HepG2 (cell line): ENCODE measurements at regions of chr3 and their contacts with region 1.

Region 1: GRCh38 chr3:4978204-4978965 is 852 bp upstream of the BHLHE40 start:
- DNase-seq: peak; percentile 91
- ATAC-seq: peak; percentile 74
- H3K4me3 ChIP-seq: peak overlapping the region; percentile 45 to 95 (median 57)
- H3K27ac ChIP-seq: peak overlapping the region; percentile 100
- H3K4me1 ChIP-seq: peaks cover 32% of the 10 kb centered on the region
- H3K27me3 ChIP-seq: no peaks in the 10 kb centered on the region; a peak in 1 of 5 replicates
- CTCF ChIP-seq: no peak; the same call in 1 of the 2 replicates
- EP300 ChIP-seq: peak; percentile 39 to 81; a peak in 3 of 4 replicates
- POLR2A ChIP-seq: peak in 1 of 2 experiments; percentile 83; a peak in 2 of 4 replicates
- RAD21 ChIP-seq: peak; percentile 28; the same call in 1 of the 2 replicates

Region 2: GRCh38 chr3:4712143-4712542 is 266.2 kb before region 1 on chr3:
- CTCF ChIA-PET with region 1: interaction called, 15 read pairs
- POLR2A ChIA-PET with region 1: no interaction called
- in situ Hi-C with region 1: no loop called
- intact Hi-C with region 1: loop called (anchors 1 kb)
- DNase-seq: no peak
- ATAC-seq: no peak
- H3K4me3 ChIP-seq: no peak overlapping the region
- H3K27ac ChIP-seq: no peak overlapping the region
- H3K4me1 ChIP-seq: no peaks in the 10 kb centered on the region
- H3K27me3 ChIP-seq: no peaks in the 10 kb centered on the region
- CTCF ChIP-seq: no peak
- EP300 ChIP-seq: no peak
- POLR2A ChIP-seq: no peak
- RAD21 ChIP-seq: no peak

Region 3: DNA sequence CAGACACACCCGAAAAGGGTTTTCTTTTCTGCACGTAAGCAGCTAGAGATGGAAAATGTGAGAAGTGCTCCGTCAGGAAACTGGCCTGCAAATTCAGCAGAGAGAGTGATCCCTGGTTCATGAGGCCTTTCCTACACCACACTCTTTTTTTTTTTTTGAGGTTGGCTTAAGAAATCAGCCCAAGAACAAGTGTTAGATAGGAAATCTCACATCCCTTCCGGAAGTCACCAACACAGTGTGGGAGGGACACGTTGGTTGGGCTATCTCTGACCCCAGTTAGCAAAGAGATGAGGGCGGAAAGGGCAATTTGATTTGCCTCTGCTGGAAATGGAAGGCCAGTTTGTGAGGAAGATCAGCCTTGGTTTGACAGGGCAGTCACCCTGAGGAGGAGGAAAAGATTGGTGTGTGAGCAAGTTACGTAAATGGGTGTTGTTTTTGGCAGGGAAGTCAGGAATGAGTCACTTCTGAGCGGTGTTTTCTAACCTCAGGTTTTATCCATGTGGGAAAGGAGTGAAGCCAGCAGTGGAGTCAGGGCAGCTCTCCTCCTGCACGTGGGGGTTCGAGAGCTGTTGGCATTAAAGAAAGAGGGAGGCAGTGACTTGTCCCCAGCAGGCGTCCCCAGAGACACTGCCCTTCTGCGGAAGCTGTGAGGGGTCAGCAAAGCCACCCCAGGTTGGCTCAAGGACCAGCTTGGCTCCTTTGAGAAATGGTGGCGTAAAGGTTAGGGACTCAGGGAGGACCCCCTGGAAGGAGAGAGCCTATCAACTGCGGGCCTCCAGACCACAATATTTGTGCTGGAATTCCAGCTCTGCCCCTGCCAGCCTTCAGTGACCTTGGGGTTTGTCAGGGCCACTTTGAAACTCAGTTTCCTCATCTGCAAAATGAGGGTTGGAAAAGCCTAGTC is 236.7 kb before region 1 on chr3:
- CTCF ChIA-PET with region 1: no interaction called
- POLR2A ChIA-PET with region 1: interaction called, 4 read pairs
- in situ Hi-C with region 1: no loop called
- intact Hi-C with region 1: loop called (anchors 2 kb)
- DNase-seq: peak; percentile 45
- ATAC-seq: no peak
- H3K4me3 ChIP-seq: no peak overlapping the region
- H3K27ac ChIP-seq: no peak overlapping the region
- H3K4me1 ChIP-seq: peaks cover 52% of the 10 kb centered on the region
- H3K27me3 ChIP-seq: no peaks in the 10 kb centered on the region
- CTCF ChIP-seq: no peak
- EP300 ChIP-seq: no peak
- POLR2A ChIP-seq: no peak
- RAD21 ChIP-seq: no peak

Region 4: DNA sequence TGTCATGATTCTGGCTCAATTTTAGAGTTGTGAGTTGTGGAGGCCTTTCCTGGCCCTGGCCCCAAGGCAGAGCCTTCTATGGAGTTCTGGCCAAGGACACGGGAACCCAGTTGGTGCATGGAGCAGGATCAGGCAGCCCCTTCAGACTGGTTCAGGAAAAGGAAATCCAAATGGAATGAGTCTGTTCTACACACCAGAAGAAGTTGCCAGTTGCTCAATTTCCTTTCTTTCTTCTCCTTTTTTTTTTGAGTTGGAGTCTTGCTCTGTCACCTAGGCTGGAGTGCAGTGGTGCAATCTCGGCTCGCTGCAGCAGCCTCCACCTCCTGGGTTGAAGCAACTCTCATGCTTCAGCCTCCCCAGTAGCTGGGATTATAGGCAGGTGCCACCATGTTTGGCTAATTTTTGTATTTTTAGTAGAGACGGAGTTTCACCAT is 28.0 kb before region 1 on chr3:
- CTCF ChIA-PET with region 1: no interaction called
- POLR2A ChIA-PET with region 1: no interaction called
- in situ Hi-C with region 1: no loop called
- intact Hi-C with region 1: no loop called
- DNase-seq: no peak
- ATAC-seq: no peak; the same call in 2 of the 3 replicates
- H3K4me3 ChIP-seq: no peak overlapping the region
- H3K27ac ChIP-seq: no peak overlapping the region
- H3K4me1 ChIP-seq: peaks cover 48% of the 10 kb centered on the region
- H3K27me3 ChIP-seq: no peaks in the 10 kb centered on the region
- CTCF ChIP-seq: no peak
- EP300 ChIP-seq: no peak
- POLR2A ChIP-seq: no peak
- RAD21 ChIP-seq: no peak

Region 5: DNA sequence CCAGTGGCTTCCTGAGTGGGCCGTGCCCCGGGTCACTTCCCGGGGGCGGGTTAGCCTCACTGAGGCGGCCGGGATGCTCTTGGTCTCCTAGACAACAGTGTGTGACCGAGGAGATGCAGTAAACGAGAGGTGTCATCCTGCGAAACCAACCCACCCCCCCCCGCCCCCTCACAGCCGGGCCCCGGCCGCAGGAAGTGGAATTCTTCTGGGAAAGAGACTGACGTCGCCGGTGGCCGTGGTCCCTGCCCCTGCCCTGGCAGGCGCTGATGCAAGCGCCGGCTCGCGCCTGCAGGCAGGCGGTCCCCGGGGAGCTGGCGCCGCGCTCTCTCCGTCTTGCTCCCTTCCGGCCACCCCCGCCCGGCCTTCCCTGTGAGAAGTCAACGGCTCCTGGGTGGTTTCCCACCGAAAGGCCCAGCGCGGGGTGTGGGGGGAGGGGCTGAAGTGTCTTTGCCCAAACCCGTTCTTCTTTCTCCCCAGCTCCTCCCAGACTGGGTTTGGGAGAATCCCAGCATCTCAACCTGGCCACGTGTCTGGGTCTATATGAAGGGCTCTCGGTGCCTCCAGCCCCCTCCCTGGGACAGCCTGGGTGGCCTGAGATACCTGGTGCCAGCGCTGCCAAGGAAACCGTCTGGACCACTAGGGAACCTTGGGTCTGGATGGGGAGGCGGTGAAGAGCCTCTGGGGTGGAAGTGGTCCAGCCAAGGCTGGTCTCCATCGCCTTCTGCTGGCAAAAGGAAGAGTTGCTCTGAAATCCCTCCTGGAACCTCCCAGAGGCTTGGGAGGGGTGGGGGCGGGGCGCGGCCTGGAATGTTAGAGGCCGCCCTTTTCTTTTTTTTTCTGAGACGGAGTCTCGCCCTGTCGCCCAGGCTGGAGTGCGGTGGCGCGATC is 48.2 kb after region 1 on chr3:
- CTCF ChIA-PET with region 1: no interaction called
- POLR2A ChIA-PET with region 1: interaction called, 8 read pairs
- in situ Hi-C with region 1: no loop called
- intact Hi-C with region 1: loop called (anchors 2 kb)
- DNase-seq: peak; percentile 76
- ATAC-seq: peak; percentile 90
- H3K4me3 ChIP-seq: peak overlapping the region; percentile 44 to 69 (median 48); a peak in 5 of 6 replicates
- H3K27ac ChIP-seq: no peak overlapping the region
- H3K4me1 ChIP-seq: peaks cover 45% of the 10 kb centered on the region
- H3K27me3 ChIP-seq: no peaks in the 10 kb centered on the region; a peak in 1 of 5 replicates
- CTCF ChIP-seq: peak; percentile 87
- EP300 ChIP-seq: no peak; a peak in 1 of 4 replicates
- POLR2A ChIP-seq: no peak
- RAD21 ChIP-seq: peak; percentile 86

Region 6: DNA sequence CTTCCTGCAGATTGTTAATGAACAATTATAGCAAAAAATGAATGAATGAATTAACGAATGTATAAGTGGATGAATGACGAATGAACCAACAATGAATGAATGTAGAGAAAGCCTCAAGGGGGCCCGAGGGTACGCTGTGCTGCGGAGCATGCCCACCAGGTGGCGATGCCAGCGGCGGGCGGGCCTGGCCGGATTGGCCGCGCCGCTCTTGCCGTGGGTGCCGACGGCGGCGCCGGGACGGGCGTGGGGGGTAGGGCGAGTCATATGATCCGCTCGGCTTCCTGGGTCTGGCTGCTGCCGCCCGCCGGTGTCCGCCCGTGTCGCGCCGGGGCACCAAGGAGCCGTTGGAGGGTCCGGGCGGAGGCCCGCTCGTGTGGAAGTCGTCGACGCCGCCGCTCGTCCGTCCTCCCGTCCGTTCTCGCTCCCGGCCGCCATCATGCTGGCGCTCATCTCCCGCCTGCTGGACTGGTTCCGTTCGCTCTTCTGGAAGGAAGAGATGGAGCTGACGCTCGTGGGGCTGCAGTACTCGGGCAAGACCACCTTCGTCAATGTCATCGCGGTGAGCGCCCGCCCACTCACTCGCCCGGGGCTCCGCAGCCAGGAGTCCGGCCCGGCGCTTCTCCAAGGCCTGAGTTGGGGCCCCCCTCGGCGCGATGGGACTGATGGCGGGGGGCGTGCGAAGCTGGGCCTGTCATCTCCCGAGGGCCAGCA is 143.8 kb after region 1 on chr3 and contains the start of gene ARL8B:
- CTCF ChIA-PET with region 1: no interaction called
- POLR2A ChIA-PET with region 1: no interaction called
- in situ Hi-C with region 1: no loop called
- intact Hi-C with region 1: loop called (anchors 5 kb)
- DNase-seq: peak; percentile 65
- ATAC-seq: peak; percentile 96
- H3K4me3 ChIP-seq: peak within 1 kb of the TSS; percentile 85 to 92 (median 91)
- H3K27ac ChIP-seq: peak within 1 kb of the TSS; percentile 82
- H3K4me1 ChIP-seq: peaks cover 32% of the 10 kb centered on the region
- H3K27me3 ChIP-seq: no peaks in the 10 kb centered on the region; a peak in 1 of 5 replicates
- CTCF ChIP-seq: peak; percentile 92
- EP300 ChIP-seq: peak in 1 of 2 experiments; percentile 61; a peak in 1 of 4 replicates
- POLR2A ChIP-seq: peak; percentile 79 to 92
- RAD21 ChIP-seq: peak; percentile 62
- total RNA-seq, gene ARL8B: 30.4 and 33.1 TPM in 2 replicates